ENCODE measurements at regions of chr14 and their contacts with region 1.

Region 1: DNA sequence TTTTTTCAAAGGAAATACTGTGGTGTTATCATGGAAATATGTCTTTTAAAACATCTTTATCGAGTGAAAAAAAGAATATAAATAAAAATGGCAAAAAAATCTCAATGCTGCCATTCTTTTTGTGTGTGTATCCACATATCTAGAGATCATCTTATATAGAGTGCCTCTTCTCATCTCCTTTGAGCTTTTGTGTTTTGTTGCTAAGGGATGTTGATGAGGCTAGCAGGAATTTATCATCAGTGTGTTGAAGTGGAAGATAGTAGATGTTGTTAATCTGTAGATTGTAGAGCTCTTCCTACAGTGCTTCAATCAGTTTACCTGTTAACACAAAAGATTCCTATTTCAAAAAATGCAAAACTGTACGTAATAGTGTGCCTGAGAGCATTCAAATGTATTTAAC is 1738.0 kb upstream of the SEL1L start:
- DNase-seq: no peak
- H3K4me3 ChIP-seq: no peak overlapping the region
- H3K27ac ChIP-seq: no peak overlapping the region
- H3K4me1 ChIP-seq: no peaks in the 10 kb centered on the region
- H3K27me3 ChIP-seq: no peaks in the 10 kb centered on the region
- CTCF ChIP-seq: no peak
- POLR2A ChIP-seq: no peak

Region 2: DNA sequence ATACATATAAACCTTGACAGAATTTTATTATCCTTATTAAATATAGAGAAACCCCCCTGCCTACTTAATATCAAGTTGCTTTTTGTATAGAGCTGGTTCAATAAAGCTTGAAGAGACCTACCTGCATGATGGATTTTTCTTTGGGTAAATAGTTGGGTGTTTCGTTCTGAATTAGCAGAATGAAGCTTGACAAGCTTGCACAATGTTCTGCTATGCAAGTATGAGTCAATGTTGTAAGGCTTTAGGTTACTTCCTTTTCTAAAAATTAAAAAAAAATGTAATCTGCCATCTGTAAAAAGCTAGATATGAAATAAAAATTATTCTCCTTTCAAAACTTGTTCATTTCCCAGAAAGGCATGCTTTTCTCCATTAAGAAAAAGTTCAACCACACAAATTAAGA is 75.4 kb before region 1 on chr14:
- CTCF ChIA-PET with region 1: no interaction called
- POLR2A ChIA-PET with region 1: no interaction called
- dilution Hi-C with region 1: no loop called
- intact Hi-C with region 1: no loop called
- DNase-seq: no peak
- H3K4me3 ChIP-seq: no peak overlapping the region
- H3K27ac ChIP-seq: no peak overlapping the region
- H3K4me1 ChIP-seq: no peaks in the 10 kb centered on the region
- H3K27me3 ChIP-seq: no peaks in the 10 kb centered on the region
- CTCF ChIP-seq: no peak
- POLR2A ChIP-seq: no peak

Region 3: DNA sequence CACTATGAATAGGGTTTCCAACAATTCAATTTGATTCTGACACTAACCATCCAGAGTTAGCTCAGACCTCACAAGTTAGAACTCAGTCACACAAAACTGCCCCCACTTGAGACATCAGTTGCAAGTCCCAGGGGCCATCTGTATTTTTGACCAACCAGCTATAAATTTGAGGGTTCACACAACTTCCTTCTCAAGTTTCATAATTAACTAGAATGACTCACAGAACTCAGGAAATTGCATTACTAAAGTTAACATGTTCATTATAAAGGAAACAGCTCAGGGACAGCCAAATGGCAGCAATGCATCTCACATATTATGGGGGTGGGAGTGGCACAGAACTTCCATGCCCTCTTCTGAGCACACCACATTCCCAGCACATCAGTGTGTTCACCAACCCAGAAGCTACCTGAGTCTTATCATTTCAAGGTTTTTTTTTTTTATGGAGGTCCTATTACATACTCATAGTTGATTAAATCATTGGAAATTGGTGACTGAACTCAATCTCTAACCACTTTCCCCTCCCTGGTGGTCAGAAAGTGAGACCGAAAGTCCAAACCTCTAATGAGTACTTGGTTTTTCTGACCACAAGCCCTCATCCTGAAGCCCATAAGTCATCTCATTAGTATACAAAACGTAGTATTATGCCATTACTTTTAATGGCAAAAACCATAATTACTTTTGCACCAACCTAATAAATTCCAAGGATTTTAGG is 16.5 kb before region 1 on chr14:
- CTCF ChIA-PET with region 1: no interaction called
- POLR2A ChIA-PET with region 1: no interaction called
- dilution Hi-C with region 1: no loop called
- intact Hi-C with region 1: no loop called
- DNase-seq: no peak
- H3K4me3 ChIP-seq: no peak overlapping the region
- H3K27ac ChIP-seq: no peak overlapping the region
- H3K4me1 ChIP-seq: no peaks in the 10 kb centered on the region
- H3K27me3 ChIP-seq: no peaks in the 10 kb centered on the region
- CTCF ChIP-seq: no peak
- POLR2A ChIP-seq: no peak

Region 4: GRCh38 chr14:83314764-83315163 is 43.1 kb after region 1 on chr14:
- CTCF ChIA-PET with region 1: no interaction called
- POLR2A ChIA-PET with region 1: no interaction called
- dilution Hi-C with region 1: no loop called
- intact Hi-C with region 1: loop called (anchors 2 kb)
- DNase-seq: no peak
- H3K4me3 ChIP-seq: no peak overlapping the region
- H3K27ac ChIP-seq: no peak overlapping the region
- H3K4me1 ChIP-seq: no peaks in the 10 kb centered on the region
- H3K27me3 ChIP-seq: no peaks in the 10 kb centered on the region
- CTCF ChIP-seq: no peak
- POLR2A ChIP-seq: no peak

Measured in endothelial cell of umbilical vein (primary cell).